ENCODE measurements at regions of chr4 and their contacts with region 1.

Region 1: DNA sequence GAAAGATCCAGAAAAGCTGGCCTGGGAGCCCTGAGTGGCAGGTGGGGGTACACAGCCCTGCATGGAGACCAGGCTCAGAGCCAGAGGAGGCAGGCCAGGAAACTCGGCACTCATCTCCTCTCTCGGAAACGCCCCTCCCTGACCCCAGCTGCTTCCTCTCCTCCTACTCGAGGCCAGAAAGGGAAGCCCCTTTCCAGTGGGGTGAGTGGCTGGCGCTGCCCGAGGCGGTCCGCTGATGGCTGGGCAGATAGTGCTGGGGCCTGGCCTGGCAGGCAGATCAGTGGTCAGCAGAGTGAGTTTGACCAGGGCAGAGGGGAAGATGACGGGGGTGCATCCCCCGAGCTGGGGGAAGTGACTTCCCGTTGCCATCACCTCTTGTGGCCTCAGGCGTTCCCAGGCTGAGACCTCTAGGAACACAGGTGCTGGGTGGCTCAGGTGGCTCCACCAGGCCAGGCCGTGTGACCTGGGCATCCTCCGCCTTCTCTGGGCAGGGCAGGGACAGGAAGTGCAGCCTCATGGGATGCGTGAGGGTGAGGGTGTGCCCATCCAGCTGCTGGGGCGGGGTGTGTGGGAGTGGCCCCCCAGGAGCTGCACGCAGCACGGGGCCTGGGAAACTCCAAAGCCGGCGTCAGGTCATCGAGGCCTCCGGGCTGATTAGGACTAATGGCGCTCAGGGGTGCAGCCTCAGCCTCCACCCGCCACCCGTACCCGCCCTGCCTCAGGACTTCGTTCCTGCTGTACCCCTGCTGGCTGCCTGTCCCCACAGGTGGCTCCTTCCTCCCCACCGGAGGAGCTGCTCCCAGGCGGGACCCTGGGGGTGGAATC is 5.7 kb downstream of the SH3BP2 start:
- DNase-seq: peak; percentile 85 to 92 (median 89)
- H3K4me3 ChIP-seq: peak overlapping the region; percentile 71 to 99 (median 86)
- H3K4me3 Mint-ChIP-seq: peak overlapping the region; percentile 96 to 97
- H3K27ac ChIP-seq: peak overlapping the region; percentile 99 to 100
- H3K27ac Mint-ChIP-seq: peak overlapping the region; percentile 97 to 99 (median 99)
- H3K4me1 ChIP-seq: peaks cover 90 to 100% of the 10 kb centered on the region in 2 donors
- H3K4me1 Mint-ChIP-seq: peaks cover 71% of the 10 kb centered on the region
- H3K27me3 ChIP-seq: no peaks in the 10 kb centered on the region
- H3K27me3 Mint-ChIP-seq: peaks cover 0 to 4% (median 2%) of the 10 kb centered on the region in 3 donors
- CTCF ChIP-seq: no peak

Region 2: DNA sequence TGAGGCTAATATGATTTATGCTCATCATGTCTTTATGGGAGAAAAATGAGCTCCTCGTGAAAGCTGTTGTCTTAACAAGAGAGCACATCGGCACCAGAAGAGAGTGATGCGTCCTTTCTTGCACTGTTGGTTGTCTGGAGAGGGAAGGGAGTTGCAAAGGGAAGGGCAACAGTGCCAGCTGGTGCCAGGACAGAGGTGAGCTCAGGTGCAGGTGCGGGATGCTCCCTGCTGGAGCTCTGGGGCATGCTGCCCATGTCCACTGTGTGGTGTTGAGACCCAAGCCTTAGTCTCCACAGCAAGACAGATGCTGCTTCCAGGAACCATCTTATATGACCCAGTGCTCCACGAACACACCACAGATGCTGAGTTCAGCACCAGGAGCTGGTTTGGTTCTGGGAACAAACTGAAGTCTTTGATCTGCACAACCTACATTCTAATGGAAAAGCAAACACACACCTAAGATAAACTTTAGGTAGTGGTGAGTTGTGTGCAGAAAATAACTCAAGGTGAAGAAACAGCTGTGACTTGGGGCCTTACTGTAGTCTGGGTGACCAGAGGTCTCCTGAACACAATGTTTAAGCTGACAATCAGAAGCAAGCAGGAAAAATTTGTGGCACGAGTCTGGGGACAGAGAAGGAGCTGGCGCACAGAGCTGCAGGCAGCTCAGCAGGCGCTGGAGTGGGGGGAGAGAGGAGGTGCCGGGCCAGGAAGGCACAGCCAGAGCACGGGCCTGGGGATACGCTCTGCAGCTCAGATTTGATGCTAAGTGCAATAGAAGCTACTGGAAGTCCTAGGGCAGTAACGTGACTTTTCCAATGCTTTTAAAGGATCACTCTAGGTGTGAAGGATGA is 629.9 kb before region 1 on chr4:
- intact Hi-C with region 1: no loop called
- DNase-seq: no peak
- H3K4me3 ChIP-seq: no peak overlapping the region
- H3K4me3 Mint-ChIP-seq: no peak overlapping the region
- H3K27ac ChIP-seq: no peak overlapping the region
- H3K27ac Mint-ChIP-seq: no peak overlapping the region
- H3K4me1 ChIP-seq: peaks cover 9 to 15% of the 10 kb centered on the region in 2 donors
- H3K4me1 Mint-ChIP-seq: peaks cover 19% of the 10 kb centered on the region
- H3K27me3 ChIP-seq: no peaks in the 10 kb centered on the region
- H3K27me3 Mint-ChIP-seq: peaks cover 0 to 4% (median 0%) of the 10 kb centered on the region in 3 donors
- CTCF ChIP-seq: no peak

Region 3: GRCh38 chr4:2743848-2744445 is 54.7 kb before region 1 on chr4:
- intact Hi-C with region 1: no loop called
- DNase-seq: no peak
- H3K4me3 ChIP-seq: no peak overlapping the region
- H3K4me3 Mint-ChIP-seq: no peak overlapping the region
- H3K27ac ChIP-seq: peak overlapping the region in 1 of 2 donors; percentile 9
- H3K27ac Mint-ChIP-seq: peak overlapping the region in 5 of 7 donors; percentile 21 to 84 (median 62)
- H3K4me1 ChIP-seq: peaks cover 8 to 16% of the 10 kb centered on the region in 2 donors
- H3K4me1 Mint-ChIP-seq: peaks cover 13% of the 10 kb centered on the region
- H3K27me3 ChIP-seq: no peaks in the 10 kb centered on the region
- H3K27me3 Mint-ChIP-seq: peaks cover 0 to 2% (median 0%) of the 10 kb centered on the region in 3 donors
- CTCF ChIP-seq: no peak

Region 4: GRCh38 chr4:2755837-2756694 is 42.5 kb before region 1 on chr4 and contains the start of gene TNIP2:
- intact Hi-C with region 1: loop called (anchors 5 kb)
- DNase-seq: peak; percentile 69 to 82 (median 73)
- H3K4me3 ChIP-seq: peak within 1 kb of the TSS; percentile 67 to 92 (median 83)
- H3K4me3 Mint-ChIP-seq: peak within 1 kb of the TSS; percentile 72 to 82
- H3K27ac ChIP-seq: peak within 1 kb of the TSS; percentile 23 to 80
- H3K27ac Mint-ChIP-seq: peak within 1 kb of the TSS; percentile 30 to 88 (median 66)
- H3K4me1 ChIP-seq: peaks cover 15 to 19% of the 10 kb centered on the region in 2 donors
- H3K4me1 Mint-ChIP-seq: peaks cover 35% of the 10 kb centered on the region
- H3K27me3 ChIP-seq: no peaks in the 10 kb centered on the region
- H3K27me3 Mint-ChIP-seq: peaks cover 0 to 10% (median 3%) of the 10 kb centered on the region in 3 donors
- CTCF ChIP-seq: peak; percentile 34
- polyA plus RNA-seq, gene TNIP2: 27.6 to 75.7 (median 28.2) TPM

Region 5: DNA sequence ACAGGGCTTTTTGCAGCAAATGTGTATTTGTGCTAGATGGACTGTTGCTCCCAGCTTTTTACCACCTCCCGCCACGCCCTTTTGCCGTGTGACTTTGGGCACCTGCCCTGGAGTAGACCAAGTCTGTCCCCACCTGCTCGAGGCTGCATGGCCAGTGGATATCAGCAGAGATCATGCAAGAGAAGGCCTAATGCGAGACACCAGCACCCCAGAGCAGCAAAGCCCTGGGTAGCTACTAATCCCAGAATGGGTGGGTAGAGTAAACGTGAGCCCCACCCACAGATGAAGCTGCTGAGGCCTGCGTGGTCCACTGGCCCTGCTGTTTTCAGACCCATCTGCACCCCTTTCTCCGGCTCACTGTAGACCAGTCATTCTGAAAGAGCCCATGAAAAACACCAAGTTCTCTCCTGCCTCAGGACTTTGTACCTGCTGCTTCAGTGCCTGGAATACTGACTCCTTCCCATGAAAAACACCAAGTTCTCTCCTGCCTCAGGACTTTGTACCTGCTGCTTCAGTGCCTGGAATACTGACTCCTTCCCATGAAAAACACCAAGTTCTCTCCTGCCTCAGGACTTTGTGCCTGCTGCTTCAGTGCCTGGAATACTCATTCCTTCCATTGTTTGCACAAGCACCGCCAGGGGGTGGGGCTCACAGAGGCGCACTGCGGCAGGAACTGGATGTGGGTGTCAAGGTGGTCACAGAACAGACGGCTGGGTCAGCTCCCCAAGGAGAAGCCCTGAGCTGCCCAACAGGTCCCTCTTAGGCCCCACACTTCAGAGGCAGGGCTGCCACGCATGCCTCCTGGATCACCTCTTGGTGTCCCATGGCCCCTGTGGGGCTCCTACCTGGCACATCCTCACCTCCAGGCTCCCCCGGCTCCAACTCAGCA is 37.3 kb before region 1 on chr4:
- intact Hi-C with region 1: loop called (anchors 5 kb)
- DNase-seq: peak in 1 of 3 donors; percentile 33
- H3K4me3 ChIP-seq: no peak overlapping the region
- H3K4me3 Mint-ChIP-seq: no peak overlapping the region
- H3K27ac ChIP-seq: no peak overlapping the region
- H3K27ac Mint-ChIP-seq: peak overlapping the region in 1 of 7 donors; percentile 28
- H3K4me1 ChIP-seq: peaks cover 11 to 28% of the 10 kb centered on the region in 2 donors
- H3K4me1 Mint-ChIP-seq: peaks cover 35% of the 10 kb centered on the region
- H3K27me3 ChIP-seq: no peaks in the 10 kb centered on the region
- H3K27me3 Mint-ChIP-seq: peaks cover 2 to 17% (median 13%) of the 10 kb centered on the region in 3 donors
- CTCF ChIP-seq: no peak

Region 6: DNA sequence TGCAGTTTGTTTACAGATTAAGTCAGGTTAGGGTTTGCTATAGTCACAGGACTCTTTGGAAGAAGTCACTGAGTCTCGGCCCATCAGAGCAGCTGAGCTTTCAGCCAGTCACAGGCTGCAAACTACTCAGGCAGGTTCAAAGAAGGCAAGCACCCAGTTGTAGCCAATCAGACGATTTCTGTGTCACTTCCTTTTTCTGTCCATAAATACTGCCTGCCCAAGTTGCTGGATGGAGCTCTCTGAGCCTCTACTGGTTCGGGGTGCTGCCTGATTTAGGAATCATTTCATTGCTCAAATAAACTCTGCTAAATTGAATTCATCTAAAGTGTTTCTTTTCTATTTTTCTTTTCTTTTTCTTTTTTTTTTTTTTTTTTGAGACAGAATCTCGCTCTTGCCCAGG is 13.0 kb before region 1 on chr4:
- intact Hi-C with region 1: loop called in 1 of 2 experiments (anchors 2 kb)
- DNase-seq: peak; percentile 79 to 91 (median 89)
- H3K4me3 ChIP-seq: peak overlapping the region in 1 of 3 experiments; percentile 30
- H3K4me3 Mint-ChIP-seq: no peak overlapping the region
- H3K27ac ChIP-seq: peak overlapping the region; percentile 91 to 97
- H3K27ac Mint-ChIP-seq: peak overlapping the region; percentile 95 to 99 (median 98)
- H3K4me1 ChIP-seq: peaks cover 57 to 62% of the 10 kb centered on the region in 2 donors
- H3K4me1 Mint-ChIP-seq: peaks cover 55% of the 10 kb centered on the region
- H3K27me3 ChIP-seq: no peaks in the 10 kb centered on the region
- H3K27me3 Mint-ChIP-seq: peaks cover 0 to 5% (median 4%) of the 10 kb centered on the region in 3 donors
- CTCF ChIP-seq: no peak

Region 7: GRCh38 chr4:2843263-2843940 is 44.8 kb after region 1 on chr4 and contains the start of gene ADD1:
- intact Hi-C with region 1: loop called in 1 of 2 experiments (anchors 5 kb)
- DNase-seq: peak; percentile 85 to 93 (median 90)
- H3K4me3 ChIP-seq: peak within 1 kb of the TSS; percentile 76 to 95 (median 88)
- H3K4me3 Mint-ChIP-seq: peak within 1 kb of the TSS; percentile 89 to 98
- H3K27ac ChIP-seq: peak within 1 kb of the TSS; percentile 76 to 80
- H3K27ac Mint-ChIP-seq: peak within 1 kb of the TSS; percentile 81 to 91 (median 89)
- H3K4me1 ChIP-seq: peaks cover 41 to 52% of the 10 kb centered on the region in 2 donors
- H3K4me1 Mint-ChIP-seq: peaks cover 56% of the 10 kb centered on the region
- H3K27me3 ChIP-seq: no peaks in the 10 kb centered on the region
- H3K27me3 Mint-ChIP-seq: peaks cover 0 to 2% (median 0%) of the 10 kb centered on the region in 3 donors
- CTCF ChIP-seq: no peak
- polyA plus RNA-seq, gene ADD1: 76.1 to 122 (median 103) TPM

Region 8: DNA sequence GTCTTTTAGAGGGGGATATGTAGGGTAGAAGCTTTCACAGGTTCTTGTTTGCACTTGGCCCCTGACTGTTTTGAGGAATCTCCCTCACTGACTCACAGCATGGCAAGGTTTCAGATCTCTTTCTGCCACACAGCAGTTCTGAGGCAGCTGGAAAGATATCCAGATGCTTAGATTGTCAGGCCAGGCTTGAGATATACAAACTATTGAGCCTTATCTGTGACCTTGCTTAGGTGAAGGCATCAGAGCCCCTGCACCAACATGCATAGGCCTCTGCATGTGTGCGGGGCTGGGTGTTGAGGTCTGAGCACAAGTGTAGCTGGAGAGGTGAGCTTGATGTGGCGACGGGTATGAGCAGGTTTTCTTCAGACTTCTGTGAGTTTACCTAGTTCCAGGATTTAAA is 369.4 kb after region 1 on chr4:
- intact Hi-C with region 1: no loop called
- DNase-seq: no peak
- H3K4me3 ChIP-seq: no peak overlapping the region
- H3K4me3 Mint-ChIP-seq: no peak overlapping the region
- H3K27ac ChIP-seq: no peak overlapping the region
- H3K27ac Mint-ChIP-seq: peak overlapping the region in 1 of 7 donors; percentile 59
- H3K4me1 ChIP-seq: no peaks in the 10 kb centered on the region
- H3K4me1 Mint-ChIP-seq: no peaks in the 10 kb centered on the region
- H3K27me3 ChIP-seq: no peaks in the 10 kb centered on the region
- H3K27me3 Mint-ChIP-seq: peaks cover 0 to 1% (median 0%) of the 10 kb centered on the region in 3 donors
- CTCF ChIP-seq: no peak